ENCODE measurements at regions of chr2 and their contacts with region 1.

Region 1: GRCh38 chr2:197705121-197705911 is at the start of gene MARS2:
- DNase-seq: peak; percentile 91
- H3K4me3 Mint-ChIP-seq: peak within 1 kb of the TSS; percentile 94
- H3K27ac Mint-ChIP-seq: peak within 1 kb of the TSS; percentile 85
- H3K4me1 Mint-ChIP-seq: peaks cover 60% of the 10 kb centered on the region
- H3K27me3 Mint-ChIP-seq: peaks cover 3% of the 10 kb centered on the region
- total RNA-seq, gene MARS2: 22.6 and 22.9 TPM in 2 replicates

Region 2: DNA sequence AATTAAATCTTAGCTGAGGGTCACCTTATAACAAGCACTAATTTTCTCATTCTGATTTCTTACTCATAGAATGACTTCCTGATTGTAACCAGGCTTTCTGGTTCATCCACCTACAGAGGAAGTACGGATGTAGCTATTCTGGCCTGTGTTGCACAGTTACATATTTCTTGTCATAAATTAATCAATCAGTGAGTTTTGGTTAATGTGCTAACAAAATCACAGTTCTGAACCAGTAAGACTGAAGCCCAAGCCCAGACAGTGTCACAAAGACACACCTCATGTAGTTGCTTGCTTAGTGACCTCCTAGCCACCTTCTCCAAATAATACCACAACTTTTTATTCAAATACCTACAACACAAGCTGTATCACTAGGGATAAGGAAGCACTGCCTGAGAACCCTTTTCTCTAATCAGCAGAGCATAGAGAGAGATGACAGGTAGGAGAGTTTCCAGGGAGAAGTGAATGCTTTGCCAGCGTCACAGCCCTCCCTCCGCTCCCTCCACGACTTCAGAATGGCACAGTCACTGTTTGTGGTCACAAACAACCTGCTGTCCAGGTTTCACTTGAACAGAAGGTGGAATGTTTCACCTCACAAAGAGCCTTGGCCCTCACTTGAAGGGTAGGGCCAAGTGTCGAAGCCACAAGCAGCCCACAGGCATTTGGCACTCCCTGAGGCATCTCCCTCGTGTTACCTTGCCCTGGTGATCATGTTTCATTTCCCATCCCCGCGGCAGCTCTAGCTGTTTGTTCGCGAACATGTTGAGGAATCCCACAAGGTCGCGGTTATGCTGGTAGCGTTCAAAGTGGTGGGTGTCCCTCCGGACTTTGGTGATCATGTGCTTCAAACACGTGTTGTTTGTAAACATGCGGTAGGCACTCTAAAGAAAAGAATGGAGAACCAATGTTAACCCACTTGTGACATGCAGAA is 1413.2 kb before region 1 on chr2:
- intact Hi-C with region 1: loop called (anchors 10 kb)
- DNase-seq: no peak
- H3K4me3 Mint-ChIP-seq: no peak overlapping the region
- H3K27ac Mint-ChIP-seq: no peak overlapping the region
- H3K4me1 Mint-ChIP-seq: peaks cover 52% of the 10 kb centered on the region
- H3K27me3 Mint-ChIP-seq: no peaks in the 10 kb centered on the region

Region 3: DNA sequence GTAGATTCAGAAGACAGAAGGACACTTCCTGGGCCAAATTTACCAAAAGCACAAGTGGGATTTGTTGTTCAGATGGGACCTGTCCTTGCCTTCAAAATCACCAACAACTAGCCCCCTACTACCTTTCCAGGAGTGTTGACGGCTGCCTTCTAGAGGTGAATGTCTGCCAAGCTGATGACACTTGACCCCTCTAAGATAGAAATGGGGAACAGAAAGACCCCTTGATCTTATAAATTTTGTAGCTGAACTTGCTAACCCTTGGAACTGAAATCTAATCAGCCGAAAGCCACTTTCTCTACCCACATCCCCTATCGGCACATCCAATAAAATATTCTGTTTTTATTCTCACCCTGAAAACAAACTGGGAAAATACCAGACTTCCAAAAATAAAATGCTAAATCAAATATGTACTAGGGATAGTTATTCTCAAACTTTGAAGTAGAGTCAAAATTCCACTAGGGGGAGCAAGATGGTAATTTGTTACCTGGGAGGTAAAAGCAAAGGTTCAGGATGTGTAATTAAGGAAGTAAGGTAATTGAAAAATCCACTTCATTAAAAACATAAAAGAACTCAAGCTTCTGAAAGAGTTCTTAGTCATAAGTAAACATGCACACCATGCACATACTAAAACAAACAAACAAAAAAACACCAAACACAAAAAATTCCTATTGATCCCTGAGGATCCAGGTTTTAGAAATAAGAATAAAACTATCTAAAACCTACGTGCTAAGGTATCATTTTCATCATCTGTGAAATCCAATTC is 514.0 kb before region 1 on chr2:
- intact Hi-C with region 1: loop called (anchors 10 kb)
- DNase-seq: no peak
- H3K4me3 Mint-ChIP-seq: peak overlapping the region; percentile 0
- H3K27ac Mint-ChIP-seq: peak overlapping the region; percentile 47
- H3K4me1 Mint-ChIP-seq: peaks cover 83% of the 10 kb centered on the region
- H3K27me3 Mint-ChIP-seq: no peaks in the 10 kb centered on the region

Region 4: DNA sequence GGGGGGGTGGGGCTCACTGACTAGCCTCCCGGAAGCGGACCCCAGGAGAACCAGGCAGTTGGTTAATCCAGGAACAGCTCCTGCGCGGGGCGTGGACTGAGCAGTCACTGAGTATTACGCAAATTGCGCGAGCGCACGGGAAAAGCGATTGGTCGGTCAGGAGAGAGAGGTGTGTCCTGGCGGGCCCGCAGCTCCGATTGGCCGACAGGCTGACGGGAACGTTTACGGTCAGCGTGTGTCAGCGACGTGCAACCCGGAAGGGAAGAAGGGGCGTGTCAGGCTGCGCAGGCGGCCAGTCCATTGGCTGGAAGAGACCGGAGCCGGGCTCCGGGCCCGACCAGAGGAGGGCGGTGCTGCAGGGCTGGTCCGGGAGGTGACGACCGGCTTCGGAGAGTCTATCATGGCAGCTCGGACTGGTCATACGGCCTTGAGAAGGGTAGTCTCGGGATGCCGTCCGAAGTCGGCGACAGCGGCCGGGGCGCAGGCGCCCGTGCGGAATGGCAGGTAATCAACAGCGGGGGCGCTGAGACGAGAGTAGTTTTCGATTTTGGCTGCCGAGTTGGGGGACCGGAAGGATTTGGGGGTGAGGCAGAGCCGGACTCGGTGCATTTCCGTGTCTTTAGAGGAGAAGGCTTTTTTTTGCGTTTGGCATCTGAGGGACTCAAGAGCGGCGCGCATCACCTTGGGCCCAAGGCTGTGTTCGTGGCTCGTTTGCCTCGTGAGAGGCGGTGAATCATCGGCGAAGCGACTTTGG is 252.0 kb before region 1 on chr2 and contains the start of gene COQ10B:
- intact Hi-C with region 1: loop called (anchors 1 kb)
- DNase-seq: peak; percentile 99
- H3K4me3 Mint-ChIP-seq: peak within 1 kb of the TSS; percentile 99
- H3K27ac Mint-ChIP-seq: peak within 1 kb of the TSS; percentile 100
- H3K4me1 Mint-ChIP-seq: peaks cover 40% of the 10 kb centered on the region
- H3K27me3 Mint-ChIP-seq: no peaks in the 10 kb centered on the region
- total RNA-seq, gene COQ10B: 26.9 and 28.8 TPM in 2 replicates

Region 5: DNA sequence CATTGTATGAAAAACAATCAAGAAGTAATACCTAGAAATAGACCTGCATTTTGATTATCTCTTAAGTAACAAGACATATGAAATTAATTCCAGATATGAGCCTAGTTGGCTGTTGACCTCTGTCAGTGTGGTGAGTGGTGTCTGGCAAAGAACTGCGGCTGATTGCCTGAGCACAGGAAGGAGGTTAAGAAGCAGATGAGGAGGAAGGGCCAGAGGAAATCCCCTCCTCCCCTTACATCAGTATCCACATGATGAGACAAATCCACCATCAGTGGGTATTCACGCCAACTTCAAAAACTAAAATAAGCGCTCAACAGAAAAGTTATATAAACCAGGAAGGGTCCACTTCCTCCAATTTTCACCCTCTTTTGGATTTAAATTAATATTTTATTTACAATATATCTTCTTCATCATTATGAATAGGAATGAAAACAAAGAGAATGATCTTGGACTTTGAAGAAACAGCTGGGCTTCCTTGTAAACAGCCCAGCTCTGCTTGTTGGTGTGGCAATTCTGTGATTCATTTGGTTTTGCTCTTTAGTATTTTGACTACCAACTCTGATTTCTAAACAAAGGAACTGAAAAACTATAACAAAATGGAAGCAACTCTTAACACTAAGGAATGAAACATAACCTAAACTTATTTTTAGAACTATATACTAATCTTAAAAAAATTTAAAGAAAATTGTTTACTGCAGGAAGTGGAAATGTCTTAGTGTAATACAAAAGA is 57.2 kb before region 1 on chr2:
- intact Hi-C with region 1: no loop called
- DNase-seq: no peak
- H3K4me3 Mint-ChIP-seq: no peak overlapping the region
- H3K27ac Mint-ChIP-seq: no peak overlapping the region
- H3K4me1 Mint-ChIP-seq: no peaks in the 10 kb centered on the region
- H3K27me3 Mint-ChIP-seq: peaks cover 11% of the 10 kb centered on the region

Region 6: DNA sequence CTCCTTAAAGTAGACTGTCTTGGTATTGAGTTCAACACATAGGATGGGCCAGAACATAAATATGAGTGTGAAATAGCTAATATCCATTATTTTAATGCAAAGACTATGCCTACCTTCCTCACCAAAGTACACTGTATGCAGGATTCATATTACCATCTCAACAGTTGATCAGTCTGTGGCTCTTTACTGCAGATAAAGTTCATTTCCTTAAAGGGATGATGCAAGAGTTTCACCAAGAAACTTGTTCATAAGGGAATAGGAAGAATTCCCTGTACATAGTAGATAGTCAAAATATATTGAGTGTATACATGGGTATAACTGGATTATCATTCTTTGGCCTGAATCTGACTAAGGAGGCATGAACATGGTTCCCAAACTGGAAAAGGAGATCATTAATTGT is 34.9 kb after region 1 on chr2:
- intact Hi-C with region 1: no loop called
- DNase-seq: no peak
- H3K4me3 Mint-ChIP-seq: no peak overlapping the region
- H3K27ac Mint-ChIP-seq: no peak overlapping the region
- H3K4me1 Mint-ChIP-seq: no peaks in the 10 kb centered on the region
- H3K27me3 Mint-ChIP-seq: peaks cover 8% of the 10 kb centered on the region

Region 7: DNA sequence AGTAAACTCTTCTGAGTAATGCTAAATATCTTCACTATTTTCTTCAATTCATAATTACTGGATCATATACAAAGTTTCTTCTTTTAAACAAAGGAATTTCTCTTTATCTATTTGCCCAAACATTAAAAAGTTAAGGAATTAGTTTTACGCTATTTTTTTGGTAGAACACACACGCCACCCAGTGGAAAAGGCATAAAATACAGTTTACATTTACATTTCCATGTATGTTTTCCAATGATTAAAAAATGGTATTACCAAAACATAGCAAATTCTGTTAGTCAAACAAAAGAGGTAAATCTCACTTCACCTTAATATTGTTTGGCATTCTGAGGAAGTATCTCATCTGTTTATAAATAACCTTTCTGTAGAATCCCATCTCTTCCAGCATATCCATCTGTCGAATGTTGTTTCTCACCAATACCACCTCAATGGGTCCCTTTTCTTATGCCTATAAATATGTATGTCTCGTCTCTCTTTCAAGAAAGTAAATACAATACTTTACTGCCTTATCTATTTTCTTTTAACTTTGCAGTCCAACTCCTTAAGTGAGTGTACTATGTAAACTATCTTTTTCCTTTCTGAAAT is 72.6 kb after region 1 on chr2:
- intact Hi-C with region 1: loop called (anchors 1 kb)
- DNase-seq: peak; percentile 6
- H3K4me3 Mint-ChIP-seq: no peak overlapping the region
- H3K27ac Mint-ChIP-seq: no peak overlapping the region
- H3K4me1 Mint-ChIP-seq: no peaks in the 10 kb centered on the region
- H3K27me3 Mint-ChIP-seq: peaks cover 10% of the 10 kb centered on the region

Region 8: GRCh38 chr2:198127627-198128026 is 422.3 kb after region 1 on chr2:
- intact Hi-C with region 1: loop called (anchors 1 kb)
- DNase-seq: peak; percentile 3
- H3K4me3 Mint-ChIP-seq: no peak overlapping the region
- H3K27ac Mint-ChIP-seq: no peak overlapping the region
- H3K4me1 Mint-ChIP-seq: no peaks in the 10 kb centered on the region
- H3K27me3 Mint-ChIP-seq: peaks cover 5% of the 10 kb centered on the region